HepG2 (cell line): ENCODE measurements at regions of chr20 and their contacts with region 1.

Region 1: DNA sequence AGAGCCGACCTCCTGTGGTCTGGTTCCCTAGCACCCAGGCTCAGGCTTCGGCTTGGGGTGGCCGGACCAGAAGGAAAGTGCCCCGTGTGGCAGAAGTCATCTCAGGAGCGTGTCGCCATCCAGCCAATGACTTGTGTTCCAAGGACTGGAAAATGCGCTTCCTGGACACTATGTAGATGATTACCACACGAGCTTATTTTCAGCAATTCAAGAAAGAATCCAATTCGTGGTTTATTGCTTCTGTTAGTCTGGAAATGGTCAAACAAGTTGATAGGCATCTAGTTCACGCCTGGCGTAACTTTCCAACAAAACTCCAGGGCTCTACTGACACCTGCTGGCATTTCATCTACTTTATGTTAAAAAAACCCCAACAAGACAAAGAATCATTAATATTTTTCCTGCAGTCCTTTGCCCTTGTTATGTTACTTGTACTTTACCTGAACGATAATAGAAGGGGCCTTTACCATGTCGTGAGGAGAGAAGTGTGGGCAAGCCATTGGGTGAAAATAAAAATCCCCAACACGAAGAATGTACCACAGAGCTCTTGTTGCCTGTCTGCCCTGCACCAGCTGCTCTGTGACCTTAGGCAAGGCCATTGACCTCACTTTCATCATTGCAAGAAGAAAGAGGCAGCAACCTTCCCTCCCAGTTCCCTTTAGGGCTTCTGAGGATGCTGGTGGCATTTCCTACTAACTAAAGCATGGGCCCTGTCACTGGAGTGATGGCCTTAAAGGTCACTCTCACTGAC is 154.7 kb upstream of the LAMP5 start:
- DNase-seq: peak; percentile 67
- ATAC-seq: peak; percentile 97
- H3K4me3 ChIP-seq: peak overlapping the region in 1 of 3 experiments; percentile 31; a peak in 2 of 6 replicates
- H3K27ac ChIP-seq: no peak overlapping the region
- H3K4me1 ChIP-seq: peaks cover 11% of the 10 kb centered on the region
- H3K27me3 ChIP-seq: peaks cover 0 to 3% of the 10 kb centered on the region in 2 experiments; a peak in 1 of 5 replicates
- CTCF ChIP-seq: peak; percentile 83
- EP300 ChIP-seq: no peak
- POLR2A ChIP-seq: no peak
- RAD21 ChIP-seq: peak; percentile 80; the same call in 1 of the 2 replicates

Region 2: GRCh38 chr20:8756410-8756809 is 603.3 kb before region 1 on chr20:
- CTCF ChIA-PET with region 1: interaction called, 13 read pairs
- POLR2A ChIA-PET with region 1: no interaction called
- in situ Hi-C with region 1: loop called (anchors 5 kb)
- intact Hi-C with region 1: loop called (anchors 1 kb)
- DNase-seq: peak; percentile 60
- ATAC-seq: peak; percentile 63
- H3K4me3 ChIP-seq: no peak overlapping the region
- H3K27ac ChIP-seq: no peak overlapping the region
- H3K4me1 ChIP-seq: peaks cover 6% of the 10 kb centered on the region; the same call in 1 of the 2 replicates
- H3K27me3 ChIP-seq: no peaks in the 10 kb centered on the region
- CTCF ChIP-seq: no peak
- EP300 ChIP-seq: no peak
- POLR2A ChIP-seq: no peak
- RAD21 ChIP-seq: no peak

Region 3: GRCh38 chr20:8782804-8783203 is 576.9 kb before region 1 on chr20:
- CTCF ChIA-PET with region 1: no interaction called
- POLR2A ChIA-PET with region 1: no interaction called
- in situ Hi-C with region 1: loop called (anchors 10 kb)
- intact Hi-C with region 1: no loop called
- DNase-seq: no peak
- ATAC-seq: no peak
- H3K4me3 ChIP-seq: no peak overlapping the region
- H3K27ac ChIP-seq: no peak overlapping the region
- H3K4me1 ChIP-seq: no peaks in the 10 kb centered on the region
- H3K27me3 ChIP-seq: no peaks in the 10 kb centered on the region
- CTCF ChIP-seq: no peak
- EP300 ChIP-seq: no peak
- POLR2A ChIP-seq: no peak
- RAD21 ChIP-seq: no peak

Region 4: DNA sequence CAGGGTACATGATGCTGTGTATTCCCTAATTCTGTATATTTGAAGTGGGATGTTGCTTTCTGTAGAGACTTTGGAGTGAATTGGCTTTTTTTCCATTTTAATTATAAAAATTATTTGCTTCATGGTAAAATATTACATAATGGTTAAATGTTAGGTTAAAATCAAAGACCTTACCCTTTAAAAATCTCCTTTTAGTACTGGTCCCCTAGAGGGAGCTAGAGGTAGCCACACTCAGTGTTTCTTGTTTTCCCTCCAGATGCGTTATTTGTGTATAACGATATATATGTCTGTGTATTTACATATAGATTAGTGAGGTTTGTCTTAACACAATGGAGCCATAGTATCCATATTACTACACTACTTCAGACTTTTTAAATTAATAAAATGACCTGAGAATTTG is 144.2 kb before region 1 on chr20:
- CTCF ChIA-PET with region 1: interaction called, 14 read pairs
- POLR2A ChIA-PET with region 1: no interaction called
- in situ Hi-C with region 1: no loop called
- intact Hi-C with region 1: loop called (anchors 1 kb)
- DNase-seq: peak; percentile 41
- ATAC-seq: peak; percentile 78
- H3K4me3 ChIP-seq: no peak overlapping the region
- H3K27ac ChIP-seq: no peak overlapping the region
- H3K4me1 ChIP-seq: no peaks in the 10 kb centered on the region
- H3K27me3 ChIP-seq: peaks cover 0 to 14% of the 10 kb centered on the region in 2 experiments; a peak in 2 of 5 replicates
- CTCF ChIP-seq: peak; percentile 47
- EP300 ChIP-seq: no peak
- POLR2A ChIP-seq: no peak
- RAD21 ChIP-seq: peak; percentile 35; the same call in 1 of the 2 replicates

Region 5: GRCh38 chr20:9375221-9375681 is 15.5 kb after region 1 on chr20:
- CTCF ChIA-PET with region 1: no interaction called
- POLR2A ChIA-PET with region 1: no interaction called
- in situ Hi-C with region 1: no loop called
- intact Hi-C with region 1: no loop called
- DNase-seq: no peak
- ATAC-seq: no peak
- H3K4me3 ChIP-seq: no peak overlapping the region
- H3K27ac ChIP-seq: no peak overlapping the region
- H3K4me1 ChIP-seq: no peaks in the 10 kb centered on the region
- H3K27me3 ChIP-seq: peaks cover 0 to 3% of the 10 kb centered on the region in 2 experiments; a peak in 1 of 5 replicates
- CTCF ChIP-seq: no peak
- EP300 ChIP-seq: no peak
- POLR2A ChIP-seq: no peak
- RAD21 ChIP-seq: no peak